HepG2 (cell line): ENCODE measurements at regions of chr3 and their contacts with region 1.

Region 1: DNA sequence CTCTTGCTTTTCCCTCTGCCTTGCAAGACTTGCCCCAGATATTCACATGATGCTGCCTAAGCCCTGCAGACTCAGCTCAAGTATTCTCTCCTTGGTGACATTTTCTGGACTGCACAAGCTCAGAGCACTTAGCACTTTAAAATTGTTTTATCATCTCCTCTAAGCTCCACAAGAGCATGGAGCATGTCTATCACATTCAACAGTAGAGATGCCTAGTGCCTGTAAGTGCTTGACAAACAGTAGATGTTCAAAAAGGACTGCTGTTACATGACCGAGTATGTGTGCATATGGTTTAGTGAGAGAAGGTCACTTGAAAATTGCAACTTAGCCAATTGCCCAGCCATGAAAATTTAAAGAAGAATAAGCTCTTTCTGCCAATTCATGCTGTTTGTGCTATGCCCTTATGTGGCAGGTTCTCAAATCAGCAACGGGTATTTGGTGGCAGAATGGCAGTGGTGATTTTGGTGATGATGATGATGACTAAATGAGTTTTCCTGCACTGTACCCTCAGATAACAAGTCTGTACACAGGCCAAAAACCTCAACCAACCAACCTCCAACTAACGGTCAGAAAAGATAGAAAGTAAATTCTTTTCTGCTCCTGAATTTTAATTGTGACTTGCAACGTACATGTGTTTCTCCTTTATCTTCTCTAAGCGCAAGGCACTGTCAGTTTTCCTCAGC is 647.2 kb upstream of the UBE2E2 start:
- DNase-seq: no peak
- ATAC-seq: no peak
- H3K4me3 ChIP-seq: no peak overlapping the region
- H3K27ac ChIP-seq: no peak overlapping the region
- H3K4me1 ChIP-seq: no peaks in the 10 kb centered on the region
- H3K27me3 ChIP-seq: no peaks in the 10 kb centered on the region
- CTCF ChIP-seq: no peak
- EP300 ChIP-seq: no peak
- POLR2A ChIP-seq: no peak
- RAD21 ChIP-seq: no peak

Region 2: GRCh38 chr3:22620498-22620897 is 64.6 kb after region 1 on chr3:
- CTCF ChIA-PET with region 1: no interaction called
- POLR2A ChIA-PET with region 1: no interaction called
- in situ Hi-C with region 1: no loop called
- intact Hi-C with region 1: no loop called
- DNase-seq: no peak
- ATAC-seq: no peak
- H3K4me3 ChIP-seq: no peak overlapping the region
- H3K27ac ChIP-seq: no peak overlapping the region
- H3K4me1 ChIP-seq: no peaks in the 10 kb centered on the region
- H3K27me3 ChIP-seq: no peaks in the 10 kb centered on the region
- CTCF ChIP-seq: no peak
- EP300 ChIP-seq: no peak
- POLR2A ChIP-seq: no peak
- RAD21 ChIP-seq: no peak

Region 3: GRCh38 chr3:22960105-22960984 is 404.5 kb after region 1 on chr3:
- CTCF ChIA-PET with region 1: no interaction called
- POLR2A ChIA-PET with region 1: no interaction called
- in situ Hi-C with region 1: loop called (anchors 25 kb)
- intact Hi-C with region 1: no loop called
- DNase-seq: peak; percentile 12
- ATAC-seq: no peak
- H3K4me3 ChIP-seq: no peak overlapping the region
- H3K27ac ChIP-seq: no peak overlapping the region
- H3K4me1 ChIP-seq: no peaks in the 10 kb centered on the region
- H3K27me3 ChIP-seq: no peaks in the 10 kb centered on the region; a peak in 1 of 5 replicates
- CTCF ChIP-seq: peak; percentile 51
- EP300 ChIP-seq: no peak
- POLR2A ChIP-seq: no peak
- RAD21 ChIP-seq: no peak